Endothelial cell of umbilical vein (primary cell): ENCODE measurements at regions of chr3 and their contacts with region 1.

Region 1: GRCh38 chr3:33440323-33441232 is at the start of gene UBP1:
- DNase-seq: peak; percentile 99
- H3K4me3 ChIP-seq: peak within 1 kb of the TSS; percentile 98 to 99 (median 98)
- H3K27ac ChIP-seq: peak within 1 kb of the TSS; percentile 86
- H3K4me1 ChIP-seq: peaks cover 23% of the 10 kb centered on the region
- H3K27me3 ChIP-seq: no peaks in the 10 kb centered on the region
- CTCF ChIP-seq: peak in 1 of 2 donors; percentile 16
- POLR2A ChIP-seq: peak; percentile 95
- total RNA-seq, gene UBP1: 89.7 and 90.5 TPM in 2 replicates

Region 2: GRCh38 chr3:32913790-32914446 is 526.7 kb before region 1 on chr3:
- CTCF ChIA-PET with region 1: no interaction called
- POLR2A ChIA-PET with region 1: no interaction called
- dilution Hi-C with region 1: no loop called
- intact Hi-C with region 1: no loop called
- DNase-seq: no peak
- H3K4me3 ChIP-seq: no peak overlapping the region
- H3K27ac ChIP-seq: no peak overlapping the region
- H3K4me1 ChIP-seq: no peaks in the 10 kb centered on the region
- H3K27me3 ChIP-seq: peaks cover 0 to 1% of the 10 kb centered on the region in 2 experiments
- CTCF ChIP-seq: no peak
- POLR2A ChIP-seq: no peak

Region 3: DNA sequence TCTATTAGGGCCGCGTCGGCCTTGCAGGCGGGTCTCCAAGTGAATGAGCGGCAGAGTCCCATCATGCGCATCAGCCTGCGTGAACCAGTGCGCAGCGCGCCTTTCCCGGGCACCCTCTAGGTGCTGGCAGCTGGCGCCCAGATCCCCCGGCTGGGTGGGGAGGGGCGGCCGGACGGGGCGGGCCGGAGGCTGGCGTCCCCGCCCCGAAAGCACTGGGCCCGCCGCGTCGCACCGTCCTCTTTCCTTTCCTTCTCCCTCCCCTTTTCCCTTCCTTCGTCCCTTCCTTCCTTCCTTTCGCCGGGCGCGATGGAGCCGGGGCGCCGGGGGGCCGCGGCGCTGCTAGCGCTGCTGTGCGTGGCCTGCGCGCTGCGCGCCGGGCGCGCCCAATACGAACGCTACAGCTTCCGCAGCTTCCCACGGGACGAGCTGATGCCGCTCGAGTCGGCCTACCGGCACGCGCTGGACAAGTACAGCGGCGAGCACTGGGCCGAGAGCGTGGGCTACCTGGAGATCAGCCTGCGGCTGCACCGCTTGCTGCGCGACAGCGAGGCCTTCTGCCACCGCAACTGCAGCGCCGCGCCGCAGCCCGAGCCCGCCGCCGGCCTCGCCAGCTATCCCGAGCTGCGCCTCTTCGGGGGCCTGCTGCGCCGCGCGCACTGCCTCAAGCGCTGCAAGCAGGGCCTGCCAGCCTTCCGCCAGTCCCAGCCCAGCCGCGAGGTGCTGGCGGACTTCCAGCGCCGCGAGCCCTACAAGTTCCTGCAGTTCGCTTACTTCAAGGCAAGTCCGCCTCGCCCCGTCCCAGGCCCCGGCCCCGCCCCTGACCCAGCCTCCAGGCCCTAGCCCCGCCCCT is 326.6 kb before region 1 on chr3 and contains the start of gene CRTAP:
- CTCF ChIA-PET with region 1: no interaction called
- POLR2A ChIA-PET with region 1: no interaction called
- dilution Hi-C with region 1: no loop called
- intact Hi-C with region 1: loop called (anchors 5 kb)
- DNase-seq: peak; percentile 98
- H3K4me3 ChIP-seq: peak within 1 kb of the TSS; percentile 55 to 70 (median 67)
- H3K27ac ChIP-seq: peak within 1 kb of the TSS; percentile 28
- H3K4me1 ChIP-seq: peaks cover 19% of the 10 kb centered on the region
- H3K27me3 ChIP-seq: no peaks in the 10 kb centered on the region
- CTCF ChIP-seq: no peak
- POLR2A ChIP-seq: peak; percentile 78
- total RNA-seq, gene CRTAP: 198 and 204 TPM in 2 replicates

Region 4: GRCh38 chr3:33211444-33211843 is 229.1 kb before region 1 on chr3:
- CTCF ChIA-PET with region 1: no interaction called
- POLR2A ChIA-PET with region 1: no interaction called
- dilution Hi-C with region 1: no loop called
- intact Hi-C with region 1: loop called (anchors 2 kb)
- DNase-seq: peak; percentile 96
- H3K4me3 ChIP-seq: no peak overlapping the region
- H3K27ac ChIP-seq: peak overlapping the region; percentile 50
- H3K4me1 ChIP-seq: peaks cover 12% of the 10 kb centered on the region
- H3K27me3 ChIP-seq: no peaks in the 10 kb centered on the region
- CTCF ChIP-seq: no peak
- POLR2A ChIP-seq: no peak

Region 5: DNA sequence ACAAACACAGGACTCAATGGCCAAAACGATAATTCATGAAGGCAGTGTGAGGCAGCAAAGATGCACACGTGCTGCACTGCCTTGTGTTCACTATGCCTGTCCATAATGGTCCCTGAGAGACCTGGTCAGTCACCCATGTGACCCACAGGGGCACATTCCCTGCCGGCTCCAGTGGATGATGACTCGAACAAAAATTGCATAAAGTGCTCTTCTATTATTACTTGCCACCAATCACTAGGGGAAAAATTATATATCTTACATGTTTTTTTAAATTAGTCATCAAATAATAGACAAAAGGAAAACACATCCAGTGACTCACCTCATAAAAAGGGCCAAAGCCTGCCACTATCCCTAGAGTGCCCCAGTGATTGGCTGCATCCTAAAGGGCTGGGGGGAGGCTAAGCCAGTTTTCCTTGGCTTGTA is 47.9 kb before region 1 on chr3:
- CTCF ChIA-PET with region 1: interaction called, 3 read pairs
- POLR2A ChIA-PET with region 1: no interaction called
- dilution Hi-C with region 1: no loop called
- intact Hi-C with region 1: loop called (anchors 2 kb)
- DNase-seq: peak; percentile 92
- H3K4me3 ChIP-seq: no peak overlapping the region
- H3K27ac ChIP-seq: peak overlapping the region; percentile 77
- H3K4me1 ChIP-seq: peaks cover 46% of the 10 kb centered on the region
- H3K27me3 ChIP-seq: no peaks in the 10 kb centered on the region
- CTCF ChIP-seq: no peak
- POLR2A ChIP-seq: no peak

Region 6: GRCh38 chr3:33428734-33429133 is 11.8 kb before region 1 on chr3:
- CTCF ChIA-PET with region 1: interaction called, 5 read pairs
- POLR2A ChIA-PET with region 1: no interaction called
- dilution Hi-C with region 1: no loop called
- intact Hi-C with region 1: loop called (anchors 1 kb)
- DNase-seq: no peak
- H3K4me3 ChIP-seq: no peak overlapping the region
- H3K27ac ChIP-seq: no peak overlapping the region
- H3K4me1 ChIP-seq: no peaks in the 10 kb centered on the region
- H3K27me3 ChIP-seq: no peaks in the 10 kb centered on the region
- CTCF ChIP-seq: no peak
- POLR2A ChIP-seq: no peak

Region 7: DNA sequence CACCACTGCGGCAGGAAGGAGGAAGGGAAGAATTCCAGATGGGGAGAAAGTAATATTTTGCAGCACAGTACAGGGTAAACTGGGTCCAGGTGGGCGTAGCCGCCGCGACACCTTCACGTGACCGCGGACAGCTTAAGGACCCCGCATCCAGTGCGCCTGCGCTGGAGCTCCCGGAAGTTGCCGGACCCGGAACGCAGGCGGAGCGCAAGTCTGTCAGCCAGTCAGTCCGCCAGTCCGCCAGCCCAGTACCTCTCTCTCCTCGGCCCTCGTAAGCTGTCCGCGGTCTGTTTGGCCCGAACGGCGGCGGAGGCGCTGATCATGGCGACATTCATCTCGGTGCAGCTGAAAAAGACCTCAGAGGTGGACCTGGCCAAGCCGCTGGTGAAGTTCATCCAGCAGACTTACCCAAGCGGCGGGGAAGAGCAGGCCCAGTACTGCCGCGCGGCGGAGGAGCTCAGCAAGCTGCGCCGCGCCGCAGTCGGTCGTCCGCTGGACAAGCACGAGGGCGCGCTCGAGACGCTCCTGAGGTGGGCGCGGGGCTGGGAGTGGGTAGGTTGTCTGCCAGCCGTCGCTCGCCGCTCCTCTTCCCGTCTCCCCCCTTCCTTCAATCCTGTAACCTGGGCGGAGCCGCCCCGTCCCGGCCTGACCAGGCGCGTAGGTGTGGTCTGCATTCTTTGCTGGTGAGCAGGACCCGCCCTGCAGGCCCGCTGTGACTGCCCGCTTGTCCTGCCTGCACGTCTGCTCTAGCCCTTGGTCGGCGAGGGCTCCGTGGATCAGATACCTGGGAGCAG is 358.0 kb after region 1 on chr3 and contains the start of gene PDCD6IP:
- CTCF ChIA-PET with region 1: no interaction called
- POLR2A ChIA-PET with region 1: no interaction called
- dilution Hi-C with region 1: no loop called
- intact Hi-C with region 1: loop called (anchors 1 kb)
- DNase-seq: peak; percentile 96
- H3K4me3 ChIP-seq: peak within 1 kb of the TSS; percentile 78 to 95 (median 91)
- H3K27ac ChIP-seq: peak within 1 kb of the TSS; percentile 78
- H3K4me1 ChIP-seq: peaks cover 24% of the 10 kb centered on the region
- H3K27me3 ChIP-seq: no peaks in the 10 kb centered on the region
- CTCF ChIP-seq: no peak
- POLR2A ChIP-seq: peak; percentile 99
- total RNA-seq, gene PDCD6IP: 265 and 268 TPM in 2 replicates